ENCODE measurements at regions of chr19 and their contacts with region 1.

Region 1: GRCh38 chr19:19192078-19192882 is at the starts of genes BORCS8 and RFXANK:
- DNase-seq: peak; percentile 98
- H3K4me3 ChIP-seq: peak within 1 kb of the TSS; percentile 80 to 94 (median 83)
- H3K27ac ChIP-seq: peak within 1 kb of the TSS; percentile 91
- H3K4me1 ChIP-seq: peaks cover 19% of the 10 kb centered on the region
- H3K27me3 ChIP-seq: no peaks in the 10 kb centered on the region
- CTCF ChIP-seq: no peak
- total RNA-seq, gene BORCS8: 13.3 to 35.1 TPM
- total RNA-seq, gene RFXANK: 66.8 to 100.0 TPM

Region 2: GRCh38 chr19:19155495-19156219 is 36.6 kb before region 1 on chr19:
- CTCF ChIA-PET with region 1: no interaction called
- dilution Hi-C with region 1: loop called (anchors 5 kb)
- in situ Hi-C with region 1: no loop called
- intact Hi-C with region 1: no loop called
- DNase-seq: no peak
- H3K4me3 ChIP-seq: no peak overlapping the region
- H3K27ac ChIP-seq: no peak overlapping the region
- H3K4me1 ChIP-seq: no peaks in the 10 kb centered on the region
- H3K27me3 ChIP-seq: no peaks in the 10 kb centered on the region
- CTCF ChIP-seq: no peak

Region 3: DNA sequence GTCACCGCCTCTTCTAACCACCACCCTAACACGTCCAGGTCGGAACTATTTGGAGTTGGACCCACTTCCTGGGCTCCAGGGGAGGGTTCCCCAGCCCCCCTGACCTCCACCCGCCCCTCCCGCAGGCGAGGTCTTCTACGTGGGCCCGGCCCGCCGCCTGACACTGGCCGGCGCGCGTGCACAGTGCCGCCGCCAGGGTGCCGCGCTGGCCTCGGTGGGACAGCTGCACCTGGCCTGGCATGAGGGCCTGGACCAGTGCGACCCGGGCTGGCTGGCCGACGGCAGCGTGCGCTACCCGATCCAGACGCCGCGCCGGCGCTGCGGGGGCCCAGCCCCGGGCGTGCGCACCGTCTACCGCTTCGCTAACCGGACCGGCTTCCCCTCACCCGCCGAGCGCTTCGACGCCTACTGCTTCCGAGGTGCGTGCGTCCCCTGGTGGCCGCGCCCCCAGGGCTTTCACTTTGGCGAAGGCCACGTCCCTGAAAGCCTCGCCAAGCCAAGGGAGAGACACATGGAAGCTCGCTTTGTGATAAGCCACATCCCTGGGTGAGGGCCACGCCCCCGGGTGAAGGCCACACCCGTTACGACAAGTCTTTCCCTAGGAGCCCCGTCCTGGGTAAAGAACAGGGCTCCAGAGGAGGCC is 32.7 kb after region 1 on chr19:
- CTCF ChIA-PET with region 1: no interaction called
- dilution Hi-C with region 1: no loop called
- in situ Hi-C with region 1: no loop called
- intact Hi-C with region 1: loop called (anchors 2 kb)
- DNase-seq: peak; percentile 59
- H3K4me3 ChIP-seq: peak overlapping the region in 1 of 3 experiments; percentile 30
- H3K27ac ChIP-seq: no peak overlapping the region
- H3K4me1 ChIP-seq: no peaks in the 10 kb centered on the region
- H3K27me3 ChIP-seq: no peaks in the 10 kb centered on the region
- CTCF ChIP-seq: peak; percentile 41 to 67

Region 4: GRCh38 chr19:19320362-19321142 is 128.3 kb after region 1 on chr19 and contains the starts of genes MAU2 and SUGP1:
- CTCF ChIA-PET with region 1: no interaction called
- dilution Hi-C with region 1: no loop called
- in situ Hi-C with region 1: no loop called
- intact Hi-C with region 1: loop called (anchors 5 kb)
- DNase-seq: peak; percentile 90
- H3K4me3 ChIP-seq: peak within 1 kb of the TSS; percentile 98 to 100 (median 99)
- H3K27ac ChIP-seq: peak within 1 kb of the TSS; percentile 91
- H3K4me1 ChIP-seq: peaks cover 8% of the 10 kb centered on the region
- H3K27me3 ChIP-seq: no peaks in the 10 kb centered on the region
- CTCF ChIP-seq: peak; percentile 4 to 45
- total RNA-seq, gene MAU2: 39.7 to 44.5 TPM
- total RNA-seq, gene SUGP1: 23.3 to 48.1 TPM